ENCODE measurements at regions of chr22 and their contacts with region 1.

Region 1: GRCh38 chr22:37218771-37219411 is 6.6 kb upstream of the SSTR3 start:
- DNase-seq: peak; percentile 82
- ATAC-seq: peak; percentile 59
- H3K4me3 Mint-ChIP-seq: peak overlapping the region; percentile 71
- H3K27ac Mint-ChIP-seq: peak overlapping the region; percentile 92
- H3K4me1 Mint-ChIP-seq: peaks cover 74% of the 10 kb centered on the region
- H3K27me3 Mint-ChIP-seq: no peaks in the 10 kb centered on the region

Region 2: DNA sequence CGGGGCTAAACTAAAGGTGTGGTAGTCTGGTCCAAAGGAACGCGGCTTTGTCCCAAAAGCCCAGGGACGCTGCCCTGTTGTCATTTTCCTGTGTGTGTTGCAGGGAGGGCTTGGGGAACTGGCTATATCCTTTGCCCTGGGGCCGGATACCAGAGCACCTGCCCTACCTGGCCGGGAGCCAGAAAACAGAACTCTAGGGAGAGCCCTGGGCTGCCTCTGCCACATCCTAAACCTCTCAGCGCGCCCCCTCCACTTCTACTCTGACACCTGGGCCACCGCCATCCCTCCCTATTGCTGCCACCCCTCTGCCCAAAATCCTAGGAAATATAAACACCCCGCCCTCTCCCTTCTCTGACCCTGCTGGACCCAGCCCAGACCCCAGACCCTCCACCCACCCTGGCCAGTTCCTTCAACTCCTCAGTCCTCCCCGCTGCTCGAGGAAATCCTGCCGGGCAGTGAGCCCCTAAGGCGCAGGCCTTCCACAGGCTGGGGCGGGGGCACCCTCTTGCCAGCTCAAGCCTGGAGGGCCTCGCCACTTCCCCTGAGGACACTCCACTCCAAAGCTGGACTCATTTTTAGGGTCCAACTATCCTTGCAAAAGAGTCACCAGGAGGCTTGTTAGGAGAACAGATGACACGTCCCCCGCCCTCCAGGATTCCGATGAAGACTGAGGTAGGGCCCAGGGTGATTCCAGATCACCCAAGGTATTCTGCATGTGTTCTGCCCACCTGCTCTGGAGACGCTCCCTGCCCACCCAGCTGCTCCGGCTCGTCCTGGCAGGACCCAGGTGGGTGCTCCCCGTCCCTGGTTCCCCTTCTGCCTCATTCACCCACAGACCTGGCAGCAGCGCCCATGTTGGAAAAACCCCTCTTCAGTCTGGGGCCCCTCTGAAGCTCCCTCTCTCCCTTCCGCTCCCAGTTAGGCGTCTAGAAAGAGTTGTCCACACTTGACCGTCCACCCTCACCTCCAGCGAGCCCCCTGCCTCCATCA is 155.2 kb before region 1 on chr22:
- CTCF ChIA-PET with region 1: no interaction called
- DNase-seq: no peak
- ATAC-seq: no peak
- H3K4me3 Mint-ChIP-seq: no peak overlapping the region
- H3K27ac Mint-ChIP-seq: no peak overlapping the region
- H3K4me1 Mint-ChIP-seq: peaks cover 35% of the 10 kb centered on the region
- H3K27me3 Mint-ChIP-seq: peaks cover 3% of the 10 kb centered on the region

Region 3: GRCh38 chr22:37229805-37230672 is 11.1 kb after region 1 on chr22:
- CTCF ChIA-PET with region 1: interaction called, 24 read pairs
- DNase-seq: peak; percentile 97
- ATAC-seq: peak; percentile 77
- H3K4me3 Mint-ChIP-seq: peak overlapping the region; percentile 57
- H3K27ac Mint-ChIP-seq: peak overlapping the region; percentile 97
- H3K4me1 Mint-ChIP-seq: peaks cover 90% of the 10 kb centered on the region
- H3K27me3 Mint-ChIP-seq: no peaks in the 10 kb centered on the region